Posterior vena cava (tissue), 2 donors: ENCODE measurements at regions of chr15 and their contacts with region 1.

Region 1: DNA sequence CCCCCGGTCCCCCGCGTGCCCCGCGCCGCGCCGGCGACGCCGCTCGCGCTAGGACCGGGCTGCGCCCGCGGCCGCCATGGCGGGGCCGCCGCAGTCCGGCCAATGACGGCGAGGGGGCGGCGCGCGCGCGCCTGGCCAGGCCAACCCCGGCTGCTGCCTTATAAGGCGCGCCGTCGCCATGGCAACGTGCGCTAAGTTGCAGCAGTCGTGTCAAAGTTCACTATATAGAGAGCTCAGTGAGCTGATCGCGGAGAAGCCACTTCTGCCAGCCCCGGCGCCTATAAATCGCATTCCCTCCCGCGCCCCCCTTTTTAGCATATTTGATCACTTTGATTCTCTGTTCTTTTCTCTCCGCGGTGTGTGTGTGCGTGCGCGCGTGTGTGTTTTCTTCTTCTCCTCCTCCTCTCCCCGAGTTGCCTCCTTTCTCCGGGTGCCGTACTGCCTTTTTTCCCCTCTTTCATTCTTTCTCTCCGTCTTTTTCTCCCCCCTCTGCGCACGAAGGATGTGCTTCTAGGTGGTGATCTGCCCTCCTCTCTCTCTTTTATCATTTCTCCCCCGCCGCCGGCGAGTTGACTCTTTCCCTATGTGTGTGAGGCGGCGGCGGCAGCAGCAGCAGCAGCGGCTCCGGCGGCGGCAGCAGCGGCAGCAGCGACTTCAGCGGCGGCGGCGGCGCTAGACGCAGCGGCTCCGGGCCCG is at the start of gene NR2F2:
- DNase-seq: peak; percentile 98
- total RNA-seq, gene NR2F2: 208 to 213 TPM

Region 2: DNA sequence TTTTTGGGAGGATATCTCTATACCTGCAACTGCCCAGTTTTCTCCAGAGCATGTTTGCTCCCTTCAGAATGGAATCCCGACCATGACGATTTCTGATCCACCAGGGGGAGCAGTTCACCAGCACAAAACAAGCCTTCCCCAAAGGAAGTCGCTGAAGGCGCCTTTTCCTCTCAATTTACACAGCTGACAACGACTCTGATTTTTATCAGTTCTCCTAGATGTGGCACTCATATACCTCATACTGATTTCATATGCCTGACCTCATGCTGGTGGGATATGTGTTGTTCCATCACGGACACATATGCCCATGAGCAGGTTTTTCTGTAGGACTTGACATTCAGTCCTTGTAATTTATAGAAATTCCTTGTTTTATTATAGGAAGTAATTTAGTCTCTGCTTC is 1071.1 kb before region 1 on chr15:
- intact Hi-C with region 1: loop called in 1 of 2 experiments (anchors 5 kb)
- DNase-seq: peak; percentile 83

Region 3: DNA sequence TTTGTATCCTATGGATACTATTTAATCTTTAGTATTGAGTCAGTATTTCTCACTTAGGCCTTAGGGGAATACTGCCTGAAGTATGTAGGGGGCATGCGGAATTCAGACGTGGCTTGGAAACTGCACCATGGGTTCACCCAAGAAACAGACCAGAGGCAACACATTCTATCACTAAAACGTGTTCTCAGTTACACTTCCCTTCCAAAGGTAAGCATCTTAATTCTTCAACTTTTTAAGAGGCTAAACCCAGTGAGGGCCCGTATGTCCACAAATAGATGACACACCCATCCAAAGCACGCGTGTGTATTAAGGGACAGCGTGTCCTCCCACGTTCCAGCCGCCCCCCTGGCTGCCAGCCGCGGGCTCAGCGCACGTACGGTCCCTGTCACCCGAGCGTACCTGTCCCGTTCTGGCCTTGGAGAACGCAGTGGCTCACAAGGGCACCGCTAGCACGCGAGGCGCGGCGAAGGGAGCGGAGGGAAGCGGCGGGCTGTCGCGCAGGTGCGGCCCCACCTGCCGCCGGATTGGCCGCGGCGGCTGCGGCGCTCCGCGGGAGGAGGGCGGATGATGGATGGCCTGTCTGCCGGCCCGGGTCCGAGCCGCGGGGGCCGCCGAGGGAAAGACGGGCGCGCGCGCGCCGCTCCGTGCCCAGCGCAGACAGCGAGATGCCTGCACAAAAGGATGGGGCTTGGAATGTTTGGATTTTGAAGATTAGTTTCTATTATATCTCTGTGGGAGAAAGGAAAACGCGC is 1004.0 kb before region 1 on chr15:
- intact Hi-C with region 1: loop called in 1 of 2 experiments (anchors 5 kb)
- DNase-seq: peak; percentile 83

Region 4: DNA sequence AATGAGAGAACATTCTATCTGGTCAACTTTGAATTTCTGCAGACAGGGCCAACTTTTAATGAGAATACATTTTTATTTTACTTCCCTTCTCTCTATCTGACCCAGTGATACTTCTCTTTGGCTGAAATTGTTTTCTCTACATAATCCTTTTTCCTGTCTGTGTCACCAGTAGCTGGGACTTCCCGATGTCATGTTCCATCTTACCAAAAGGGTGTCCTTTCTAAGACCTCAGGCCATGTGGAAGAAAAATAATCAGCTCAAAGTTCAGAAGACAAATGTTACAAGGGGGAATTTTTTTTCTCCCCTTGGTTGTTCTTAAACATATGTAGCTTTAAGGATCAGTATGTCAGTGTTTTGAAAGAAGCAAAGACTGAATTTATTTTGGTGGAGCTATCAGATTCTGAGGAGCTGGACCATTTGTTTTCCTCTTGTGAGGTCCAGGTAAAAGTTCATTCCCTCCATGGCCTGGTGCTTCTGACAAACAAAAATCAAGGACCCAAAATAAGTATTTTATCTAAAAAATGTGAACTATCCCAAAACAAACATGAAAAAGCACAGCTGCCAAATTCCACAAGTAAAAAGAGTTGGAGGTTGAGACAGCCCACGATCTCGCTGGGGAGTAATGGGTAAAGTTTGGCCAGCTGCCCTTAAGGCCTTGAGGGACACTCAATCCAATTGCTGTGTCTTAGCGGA is 859.5 kb before region 1 on chr15:
- intact Hi-C with region 1: loop called (anchors 10 kb)
- DNase-seq: peak; percentile 74

Region 5: DNA sequence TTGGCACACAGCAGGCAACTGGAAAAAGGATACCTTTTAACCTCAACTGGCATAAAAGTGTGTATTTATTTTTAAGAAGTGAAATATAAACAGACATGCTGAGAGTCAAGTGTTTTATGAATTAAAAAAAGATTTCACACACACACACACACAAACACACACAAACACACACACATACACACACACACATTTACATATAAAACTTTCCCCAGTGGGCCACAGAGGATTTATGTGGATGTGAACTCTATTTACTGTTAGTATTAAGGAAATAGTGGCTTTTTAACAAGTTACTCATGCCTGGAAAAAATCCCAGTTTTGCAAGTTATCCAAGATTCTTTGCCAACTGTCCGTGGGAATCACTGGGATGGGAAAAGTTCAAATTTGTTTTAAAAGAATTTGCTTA is 726.0 kb before region 1 on chr15:
- intact Hi-C with region 1: loop called in 1 of 2 experiments (anchors 10 kb)
- DNase-seq: no peak

Region 6: GRCh38 chr15:95884276-95884675 is 446.3 kb before region 1 on chr15:
- intact Hi-C with region 1: loop called in 1 of 2 experiments (anchors 10 kb)
- DNase-seq: no peak

Region 7: GRCh38 chr15:96160269-96160668 is 170.3 kb before region 1 on chr15:
- intact Hi-C with region 1: loop called in 1 of 2 experiments (anchors 10 kb)
- DNase-seq: peak; percentile 88

Region 8: DNA sequence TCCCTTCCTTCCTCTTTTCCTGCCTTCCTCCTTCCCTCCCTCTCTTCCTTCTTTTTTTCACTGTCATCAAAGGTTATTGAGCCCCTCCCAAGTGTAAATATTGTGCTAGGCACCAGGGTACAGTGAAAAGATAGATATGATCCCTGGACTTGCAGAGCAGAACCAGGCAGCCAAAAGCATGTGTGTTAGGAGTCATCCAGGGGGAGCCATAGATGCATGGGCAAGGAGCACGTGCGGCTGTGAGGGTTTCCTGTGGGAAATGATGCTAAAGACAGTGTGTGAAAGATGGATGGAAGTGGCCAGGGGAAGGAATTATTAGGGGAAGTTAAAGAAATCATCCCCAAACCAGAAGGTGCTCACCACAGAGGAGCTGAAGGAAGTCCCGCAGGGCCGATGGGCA is 65.1 kb after region 1 on chr15:
- intact Hi-C with region 1: no loop called
- DNase-seq: no peak